Body of pancreas (tissue), 4 donors: ENCODE measurements at regions of chr3 and their contacts with region 1.

Region 1: GRCh38 chr3:161274719-161275298 is 53.7 kb downstream of the NMD3 start:
- DNase-seq: peak; percentile 27 to 49 (median 41)
- ATAC-seq: no peak
- H3K4me3 ChIP-seq: no peak overlapping the region
- H3K27ac ChIP-seq: no peak overlapping the region
- H3K4me1 ChIP-seq: no peaks in the 10 kb centered on the region
- H3K27me3 ChIP-seq: no peaks in the 10 kb centered on the region
- CTCF ChIP-seq: peak in 6 of 7 experiments; percentile 26 to 54 (median 45)
- POLR2A ChIP-seq: no peak

Region 2: GRCh38 chr3:161430307-161430706 is 155.5 kb after region 1 on chr3:
- intact Hi-C with region 1: loop called (anchors 5 kb)
- DNase-seq: no peak
- ATAC-seq: no peak
- H3K4me3 ChIP-seq: no peak overlapping the region
- H3K27ac ChIP-seq: no peak overlapping the region
- H3K4me1 ChIP-seq: no peaks in the 10 kb centered on the region
- H3K27me3 ChIP-seq: no peaks in the 10 kb centered on the region
- CTCF ChIP-seq: no peak
- POLR2A ChIP-seq: no peak

Region 3: DNA sequence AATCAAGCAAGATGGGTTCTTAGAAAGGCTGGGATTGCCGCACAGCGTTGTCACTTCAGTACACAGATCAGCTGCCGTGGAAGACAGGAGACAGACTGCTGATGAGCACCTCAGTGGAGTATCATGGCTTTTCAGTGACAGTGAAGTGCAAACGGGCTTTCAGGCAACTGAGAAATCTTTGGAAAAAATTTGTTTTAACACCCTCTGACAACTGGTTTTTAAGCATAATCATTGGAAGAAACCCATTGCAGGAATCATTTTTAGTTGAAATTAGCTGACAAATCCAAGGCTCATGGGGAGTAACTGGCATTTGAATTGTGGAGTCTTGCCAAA is 640.6 kb after region 1 on chr3:
- intact Hi-C with region 1: no loop called
- DNase-seq: no peak
- ATAC-seq: no peak
- H3K4me3 ChIP-seq: no peak overlapping the region
- H3K27ac ChIP-seq: no peak overlapping the region
- H3K4me1 ChIP-seq: no peaks in the 10 kb centered on the region
- H3K27me3 ChIP-seq: no peaks in the 10 kb centered on the region
- CTCF ChIP-seq: no peak
- POLR2A ChIP-seq: no peak